ENCODE measurements at regions of chr11 and their contacts with region 1.

Region 1: DNA sequence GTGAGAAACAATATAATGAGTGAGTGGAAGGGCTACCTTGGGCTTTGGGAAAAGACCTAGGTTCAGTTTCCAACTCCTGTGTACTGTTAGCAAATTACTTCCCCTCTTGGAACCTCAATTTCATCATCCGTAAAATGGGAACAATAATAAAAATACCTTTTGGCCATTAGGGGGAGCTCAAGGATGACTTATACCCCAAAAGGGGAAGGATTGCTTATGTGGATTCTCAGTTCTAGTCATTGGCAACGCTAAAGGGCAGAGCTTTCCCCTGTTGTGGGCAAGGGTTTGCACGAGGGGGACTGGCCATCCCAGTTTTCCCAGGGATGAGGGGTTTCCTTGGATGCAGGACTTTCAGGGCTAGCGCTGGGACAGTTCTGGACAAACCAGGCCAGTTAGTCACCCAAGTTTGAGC is 3.1 kb upstream of the COMMD9 start:
- DNase-seq: no peak
- H3K4me3 ChIP-seq: no peak overlapping the region
- H3K27ac ChIP-seq: no peak overlapping the region
- H3K4me1 ChIP-seq: peaks cover 3 to 21% (median 12%) of the 10 kb centered on the region in 3 donors
- H3K27me3 ChIP-seq: no peaks in the 10 kb centered on the region
- CTCF ChIP-seq: peak; percentile 12 to 68 (median 51)
- POLR2A ChIP-seq: no peak

Region 2: DNA sequence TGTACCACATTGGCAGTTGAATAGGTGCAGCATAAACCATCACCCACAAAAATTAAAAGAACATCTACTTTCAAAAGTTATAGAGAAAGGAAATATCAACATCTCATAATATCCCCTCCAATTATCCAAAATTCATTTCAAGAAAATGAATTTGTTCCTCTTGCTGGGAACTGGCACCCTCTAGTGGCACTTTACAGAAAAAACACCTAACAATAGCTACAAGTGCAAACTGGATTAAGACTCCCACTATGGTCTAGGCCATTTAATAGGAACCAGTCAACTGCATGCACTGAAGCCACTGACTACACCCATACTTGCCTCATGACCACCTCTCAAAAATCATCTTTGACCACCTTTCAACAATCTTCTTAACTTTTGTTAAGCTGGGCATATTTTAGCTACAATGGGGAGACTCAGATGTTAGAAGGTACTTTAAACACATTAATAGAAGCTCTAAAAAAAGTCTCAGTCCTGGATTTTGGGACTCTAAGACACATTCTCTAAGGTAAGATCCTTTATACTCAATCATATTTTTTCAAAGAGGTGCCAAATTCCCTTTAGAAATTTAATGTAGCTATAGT is 200.5 kb after region 1 on chr11:
- intact Hi-C with region 1: loop called (anchors 5 kb)
- DNase-seq: no peak
- H3K4me3 ChIP-seq: no peak overlapping the region
- H3K27ac ChIP-seq: no peak overlapping the region
- H3K4me1 ChIP-seq: peaks cover 0 to 4% (median 0%) of the 10 kb centered on the region in 3 donors
- H3K27me3 ChIP-seq: no peaks in the 10 kb centered on the region
- CTCF ChIP-seq: peak; percentile 20 to 76 (median 63)
- POLR2A ChIP-seq: no peak

Measured in esophagus squamous epithelium (tissue), 5 donors.